Transverse colon (tissue), 4 donors: ENCODE measurements at regions of chr7 and their contacts with region 1.

Region 1: GRCh38 chr7:23597094-23598091 is at the start of gene CCDC126:
- DNase-seq: peak; percentile 95
- H3K4me3 ChIP-seq: peak within 1 kb of the TSS; percentile 74 to 83 (median 80)
- H3K27ac ChIP-seq: peak within 1 kb of the TSS; percentile 96 to 100 (median 99)
- H3K4me1 ChIP-seq: peaks cover 4 to 18% (median 13%) of the 10 kb centered on the region in 4 donors
- H3K27me3 ChIP-seq: no peaks in the 10 kb centered on the region
- CTCF ChIP-seq: no peak
- EP300 ChIP-seq: no peak
- POLR2A ChIP-seq: peak; percentile 63
- total RNA-seq, gene CCDC126: 14.5 to 22.8 (median 14.6) TPM in 3 of 4 donors, not detected in the other

Region 2: GRCh38 chr7:21777921-21778320 is 1819.5 kb before region 1 on chr7:
- in situ Hi-C with region 1: no loop called
- intact Hi-C with region 1: loop called (anchors 5 kb)
- DNase-seq: no peak
- H3K4me3 ChIP-seq: no peak overlapping the region
- H3K27ac ChIP-seq: no peak overlapping the region
- H3K4me1 ChIP-seq: no peaks in the 10 kb centered on the region
- H3K27me3 ChIP-seq: no peaks in the 10 kb centered on the region
- CTCF ChIP-seq: no peak
- EP300 ChIP-seq: no peak
- POLR2A ChIP-seq: no peak

Region 3: DNA sequence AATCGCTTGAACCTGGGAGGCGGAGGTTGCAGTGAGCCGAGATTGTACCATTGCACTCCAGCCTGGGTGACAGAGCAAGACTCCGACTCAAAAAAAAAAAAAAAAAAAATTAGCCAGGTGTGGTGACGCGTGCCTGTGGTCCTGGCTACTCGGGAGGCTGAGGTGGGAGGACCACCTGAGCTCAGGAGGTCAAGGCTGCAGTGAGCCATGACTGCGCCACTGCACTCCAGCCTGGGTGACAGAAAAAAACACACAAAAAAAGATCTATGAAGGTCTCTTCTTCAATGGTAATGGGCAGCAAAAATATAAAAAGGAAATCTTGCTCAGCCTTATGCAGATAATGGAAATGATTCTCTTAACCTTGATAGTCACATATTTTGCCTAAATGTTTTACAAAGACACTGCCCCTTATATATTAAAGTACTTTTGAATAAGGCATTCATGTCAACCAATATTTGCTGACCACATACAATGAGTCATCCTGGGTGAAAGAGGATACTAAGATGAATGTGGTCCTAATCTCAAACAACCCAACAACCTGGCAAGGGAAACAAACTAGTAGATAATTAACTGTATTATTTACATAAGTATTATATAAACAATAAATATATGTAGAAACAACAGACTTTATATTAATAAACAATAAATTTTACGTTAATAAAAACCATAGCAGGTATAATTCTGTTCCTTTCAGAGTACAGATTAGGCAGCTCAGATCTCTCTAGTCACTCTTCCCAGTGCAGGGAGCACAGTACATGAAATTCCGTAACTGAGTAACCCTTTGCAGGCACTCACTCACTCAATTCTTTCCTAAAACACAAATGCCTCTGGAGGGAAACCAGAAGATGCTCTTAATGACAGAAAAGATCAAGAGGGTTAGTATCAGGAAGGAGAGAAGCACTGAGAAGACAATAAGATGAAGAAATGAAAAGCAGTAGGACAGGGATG is 782.9 kb before region 1 on chr7:
- in situ Hi-C with region 1: no loop called
- intact Hi-C with region 1: no loop called
- DNase-seq: no peak
- H3K4me3 ChIP-seq: no peak overlapping the region
- H3K27ac ChIP-seq: no peak overlapping the region
- H3K4me1 ChIP-seq: no peaks in the 10 kb centered on the region
- H3K27me3 ChIP-seq: no peaks in the 10 kb centered on the region
- CTCF ChIP-seq: no peak
- EP300 ChIP-seq: no peak
- POLR2A ChIP-seq: no peak

Region 4: GRCh38 chr7:23531794-23532489 is 65.5 kb before region 1 on chr7 and contains the start of gene TRA2A:
- in situ Hi-C with region 1: no loop called
- intact Hi-C with region 1: loop called (anchors 10 kb)
- DNase-seq: peak; percentile 98
- H3K4me3 ChIP-seq: peak within 1 kb of the TSS; percentile 84 to 93 (median 88)
- H3K27ac ChIP-seq: peak within 1 kb of the TSS; percentile 94 to 97 (median 96)
- H3K4me1 ChIP-seq: peaks cover 11 to 38% (median 30%) of the 10 kb centered on the region in 4 donors
- H3K27me3 ChIP-seq: no peaks in the 10 kb centered on the region
- CTCF ChIP-seq: no peak
- EP300 ChIP-seq: no peak
- POLR2A ChIP-seq: peak; percentile 96
- total RNA-seq, gene TRA2A: 31.7 to 199 (median 111) TPM

Region 5: DNA sequence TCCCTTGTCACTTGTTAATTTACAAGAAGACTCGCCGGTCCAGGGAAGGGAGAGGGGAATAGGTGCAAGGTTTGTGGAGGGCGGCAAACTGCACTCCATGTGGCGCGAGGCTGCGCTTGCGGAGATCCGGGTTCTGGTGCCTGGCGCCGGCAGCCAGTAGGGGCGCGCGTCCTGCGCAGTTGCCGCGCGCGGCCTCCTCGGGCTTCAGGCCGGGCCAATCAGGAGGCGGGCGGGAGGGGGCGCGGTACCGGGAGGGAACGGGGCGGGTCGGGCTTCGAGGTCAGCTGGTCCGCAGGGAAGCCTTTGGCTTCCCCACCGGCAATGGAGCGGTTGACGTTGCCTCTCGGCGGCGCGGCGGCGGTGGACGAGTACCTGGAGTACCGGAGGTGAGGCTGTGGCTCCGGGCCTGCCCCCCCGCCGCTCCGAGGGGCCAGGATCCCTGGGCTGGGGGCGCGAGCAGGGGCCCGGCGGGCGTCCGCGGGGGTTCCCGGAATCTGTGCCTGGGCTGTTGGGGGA is 82.6 kb after region 1 on chr7 and contains the start of gene FAM221A:
- in situ Hi-C with region 1: loop called in 2 of 4 experiments (anchors 10 kb)
- intact Hi-C with region 1: no loop called
- DNase-seq: peak; percentile 94
- H3K4me3 ChIP-seq: peak within 1 kb of the TSS; percentile 60 to 96 (median 86)
- H3K27ac ChIP-seq: peak within 1 kb of the TSS; percentile 87 to 90 (median 89)
- H3K4me1 ChIP-seq: peaks cover 0 to 25% (median 4%) of the 10 kb centered on the region in 4 donors
- H3K27me3 ChIP-seq: no peaks in the 10 kb centered on the region
- CTCF ChIP-seq: peak; percentile 70 to 91 (median 84)
- EP300 ChIP-seq: no peak
- POLR2A ChIP-seq: no peak
- total RNA-seq, gene FAM221A: 7.5 to 18.4 (median 13.1) TPM